A549 (cell line): ENCODE measurements at regions of chr20 and their contacts with region 1.

Region 1: GRCh38 chr20:62409931-62410745 is 3.1 kb upstream of the CABLES2 start:
- DNase-seq: peak; percentile 49 to 51
- ATAC-seq: peak; percentile 27 to 47; a peak in 5 of 6 replicates
- H3K4me3 ChIP-seq: 0 out of 3 replicates have a peak overlapping the region, but pooled peaks have one; percentile 7
- H3K27ac ChIP-seq: peak overlapping the region in 1 of 2 experiments; percentile 30; a peak in 2 of 6 replicates
- H3K4me1 ChIP-seq: peaks cover 21% of the 10 kb centered on the region
- CTCF ChIP-seq: peak; percentile 61
- EP300 ChIP-seq: no peak
- POLR2A ChIP-seq: no peak
- RAD21 ChIP-seq: peak; percentile 56 to 64

Region 2: DNA sequence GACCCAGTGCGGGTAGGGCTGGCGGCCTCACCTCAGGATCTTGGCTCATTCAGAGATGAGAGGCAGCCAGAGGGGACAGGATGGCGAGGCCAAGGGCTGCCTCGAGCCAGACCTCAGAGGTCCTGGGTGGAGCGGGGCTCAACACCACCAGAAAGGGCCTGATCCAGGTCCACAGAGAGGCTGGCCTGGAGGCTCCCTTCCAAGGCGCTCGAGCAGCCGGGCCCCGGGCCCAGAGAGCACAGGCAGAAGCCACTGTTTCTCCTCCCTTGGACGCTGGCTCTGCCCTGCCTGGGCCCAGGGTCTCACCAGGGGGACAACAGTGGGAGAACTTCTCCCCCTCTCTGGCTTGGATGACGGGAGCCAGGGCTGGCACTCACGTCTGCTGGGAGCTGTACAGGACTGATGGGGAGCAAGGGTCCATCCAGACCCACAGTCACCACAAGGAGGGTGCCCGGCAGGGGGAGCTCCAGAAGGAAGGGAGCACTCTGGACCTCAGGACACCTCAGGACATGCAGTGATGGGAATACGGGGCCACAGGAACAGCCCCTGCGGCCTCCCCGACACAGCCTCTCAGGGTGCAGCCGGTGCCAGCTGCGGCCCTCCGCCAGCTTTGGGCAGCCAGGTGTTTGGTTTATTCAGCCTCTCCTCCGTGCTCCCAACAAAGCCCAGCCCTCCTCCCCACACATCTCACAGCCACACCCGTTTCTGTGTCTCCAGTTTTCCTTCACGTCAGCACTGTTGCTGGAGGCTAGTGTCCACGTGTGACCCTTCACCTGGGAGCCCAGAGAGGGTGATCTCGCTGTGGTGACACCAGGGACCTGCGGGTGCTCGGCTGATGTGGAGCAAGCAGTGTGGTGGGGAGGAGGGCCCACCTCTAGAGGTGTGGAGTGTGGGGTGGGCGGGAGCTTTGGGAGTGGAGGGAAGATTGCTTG is 14.6 kb before region 1 on chr20:
- CTCF ChIA-PET with region 1: interaction called, 13 read pairs
- POLR2A ChIA-PET with region 1: no interaction called
- DNase-seq: no peak
- ATAC-seq: peak; percentile 44 to 72; a peak in 5 of 6 replicates
- H3K4me3 ChIP-seq: no peak overlapping the region
- H3K27ac ChIP-seq: no peak overlapping the region
- H3K4me1 ChIP-seq: no peaks in the 10 kb centered on the region
- CTCF ChIP-seq: peak; percentile 26
- EP300 ChIP-seq: no peak
- POLR2A ChIP-seq: no peak
- RAD21 ChIP-seq: no peak

Region 3: DNA sequence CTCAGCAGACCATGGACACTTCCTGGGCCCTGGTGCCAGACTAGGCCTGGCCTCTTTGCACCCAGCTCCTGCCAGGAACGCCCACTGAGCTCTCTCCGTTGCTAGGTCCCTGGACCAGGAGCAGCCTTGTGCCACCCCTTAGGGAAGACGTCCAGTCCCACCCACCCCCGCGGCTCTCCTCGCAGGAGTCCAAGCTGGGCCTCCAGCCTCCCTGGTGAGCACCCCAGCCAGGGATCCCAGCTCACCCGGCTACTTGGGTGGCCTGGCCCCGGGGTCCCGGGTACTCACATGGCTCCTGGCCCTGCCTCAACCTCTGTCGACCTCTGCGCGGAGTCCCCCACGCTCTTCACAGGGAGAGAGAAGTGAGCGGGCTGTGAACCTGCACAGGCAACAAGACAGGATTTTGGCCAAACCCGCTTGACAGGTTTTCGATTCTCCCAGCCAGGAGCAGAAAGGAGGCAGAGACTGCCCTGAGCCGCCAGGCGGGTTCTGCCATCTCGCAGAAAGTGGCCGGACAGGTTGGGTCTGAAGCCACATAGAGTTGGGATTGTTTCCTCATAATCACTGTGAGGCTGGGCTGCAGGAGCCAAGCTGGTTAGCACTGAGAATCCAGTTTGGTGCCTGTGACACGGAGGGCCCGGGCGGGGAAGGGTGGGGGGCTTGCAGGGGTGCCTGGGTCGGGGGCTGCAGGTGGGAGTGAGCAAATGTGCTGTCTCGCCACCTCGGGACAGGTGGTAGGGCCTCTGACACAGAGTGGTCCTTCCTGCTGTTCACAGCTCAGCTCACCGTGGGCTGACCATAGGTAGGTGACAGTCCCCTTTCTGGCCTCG is 17.2 kb after region 1 on chr20 and contains the start of gene RBBP8NL:
- CTCF ChIA-PET with region 1: interaction called, 31 read pairs
- POLR2A ChIA-PET with region 1: no interaction called
- DNase-seq: no peak
- ATAC-seq: 0 out of 6 replicates have a peak, but pooled peaks of 1 of the 2 experiments have one; percentile 10
- H3K4me3 ChIP-seq: no peak within 1 kb of the TSS
- H3K27ac ChIP-seq: no peak within 1 kb of the TSS
- H3K4me1 ChIP-seq: no peaks in the 10 kb centered on the region
- CTCF ChIP-seq: no peak
- EP300 ChIP-seq: no peak
- POLR2A ChIP-seq: no peak
- RAD21 ChIP-seq: no peak
- polyA plus RNA-seq, gene RBBP8NL: not detected in 2 replicates

Region 4: DNA sequence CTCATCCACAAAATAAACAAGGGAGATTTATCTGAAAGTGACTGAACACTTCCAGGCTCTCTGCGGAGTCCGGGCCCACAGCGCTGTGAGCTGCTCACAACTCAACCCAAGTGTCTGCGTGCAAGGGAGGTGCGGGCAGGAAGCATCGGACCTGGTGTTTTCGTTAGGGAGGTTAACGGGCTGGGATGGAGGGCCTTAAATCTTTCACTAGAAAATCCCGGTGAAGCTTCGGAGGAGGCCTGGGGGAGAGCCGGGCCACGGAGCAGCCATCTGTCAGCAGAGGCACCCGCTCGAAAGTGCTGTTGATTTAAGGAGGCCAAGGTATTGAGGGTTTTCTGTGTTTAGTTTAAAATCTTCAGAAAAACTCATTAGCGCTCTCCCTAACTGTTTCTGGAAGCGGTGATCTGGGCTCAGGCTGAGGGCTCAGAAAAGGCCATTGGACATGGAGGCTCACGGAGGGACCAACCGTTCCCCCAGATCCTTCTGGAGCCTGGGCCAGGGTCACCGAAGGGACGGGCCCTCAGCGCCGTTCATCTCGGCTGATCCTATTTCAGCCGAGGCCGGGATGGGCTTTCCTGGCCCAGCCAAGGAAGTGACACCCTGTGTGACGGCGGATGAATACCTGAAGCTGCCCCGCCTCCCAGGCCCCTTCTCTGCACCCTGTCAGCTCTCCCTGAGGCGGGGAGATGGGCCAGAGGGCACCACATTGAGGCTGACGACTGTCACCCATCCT is 44.9 kb after region 1 on chr20:
- CTCF ChIA-PET with region 1: interaction called, 10 read pairs
- POLR2A ChIA-PET with region 1: no interaction called
- DNase-seq: no peak
- ATAC-seq: no peak
- H3K4me3 ChIP-seq: no peak overlapping the region
- H3K27ac ChIP-seq: no peak overlapping the region
- H3K4me1 ChIP-seq: no peaks in the 10 kb centered on the region
- CTCF ChIP-seq: no peak
- EP300 ChIP-seq: no peak
- POLR2A ChIP-seq: no peak
- RAD21 ChIP-seq: no peak